GM10248 (cell line): ENCODE measurements at regions of chr15 and their contacts with region 1.

Region 1: DNA sequence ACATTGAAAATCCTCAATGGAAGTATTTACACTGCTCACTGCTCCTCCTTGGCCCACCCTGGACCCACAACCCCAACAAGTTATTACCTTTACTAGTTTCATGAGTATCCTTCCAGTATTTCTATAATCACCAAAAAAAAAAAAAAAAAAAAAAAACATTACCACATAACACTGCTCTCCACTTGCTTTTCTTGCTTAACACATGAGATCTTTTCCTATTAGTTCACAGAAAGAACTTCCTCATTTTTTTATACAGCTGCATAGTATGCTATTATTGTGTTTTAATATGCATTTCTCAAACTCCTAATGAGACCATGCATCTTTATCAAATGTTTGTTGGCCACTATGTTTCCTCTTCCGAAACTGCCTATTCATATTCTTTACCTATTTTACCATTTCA is 14.6 kb downstream of the GABPB1 start:
- DNase-seq: no peak
- CTCF ChIP-seq: no peak

Region 2: GRCh38 chr15:50107591-50108408 is 232.6 kb before region 1 on chr15:
- CTCF ChIA-PET with region 1: no interaction called
- POLR2A ChIA-PET with region 1: no interaction called
- DNase-seq: peak; percentile 65
- CTCF ChIP-seq: no peak

Region 3: DNA sequence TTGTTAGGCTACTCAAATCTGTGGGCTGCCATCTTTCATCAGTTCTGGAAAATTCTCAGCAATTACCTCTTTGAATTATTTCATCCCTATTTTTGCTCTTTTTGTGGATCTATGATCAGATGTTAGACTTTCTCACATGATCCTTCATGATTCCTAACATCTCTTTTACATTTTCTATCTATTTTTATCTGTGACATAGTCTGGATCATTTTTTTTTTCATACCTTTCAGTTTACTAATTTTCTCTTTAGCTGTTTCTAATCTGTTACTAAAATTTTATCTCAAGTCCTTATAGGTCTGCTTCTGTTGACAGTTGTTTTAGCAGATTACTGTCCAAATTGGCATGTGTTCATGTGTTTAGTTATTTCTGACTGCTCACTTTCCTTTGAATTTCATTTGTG is 32.6 kb before region 1 on chr15:
- CTCF ChIA-PET with region 1: no interaction called
- POLR2A ChIA-PET with region 1: no interaction called
- DNase-seq: no peak
- CTCF ChIP-seq: no peak

Region 4: GRCh38 chr15:50350621-50351020 is 10.2 kb after region 1 on chr15:
- CTCF ChIA-PET with region 1: interaction called, 16 read pairs
- POLR2A ChIA-PET with region 1: no interaction called
- DNase-seq: no peak
- CTCF ChIP-seq: no peak

Region 5: GRCh38 chr15:50377867-50378751 is 37.7 kb after region 1 on chr15:
- CTCF ChIA-PET with region 1: no interaction called
- POLR2A ChIA-PET with region 1: no interaction called
- DNase-seq: peak; percentile 81
- CTCF ChIP-seq: no peak

Region 6: DNA sequence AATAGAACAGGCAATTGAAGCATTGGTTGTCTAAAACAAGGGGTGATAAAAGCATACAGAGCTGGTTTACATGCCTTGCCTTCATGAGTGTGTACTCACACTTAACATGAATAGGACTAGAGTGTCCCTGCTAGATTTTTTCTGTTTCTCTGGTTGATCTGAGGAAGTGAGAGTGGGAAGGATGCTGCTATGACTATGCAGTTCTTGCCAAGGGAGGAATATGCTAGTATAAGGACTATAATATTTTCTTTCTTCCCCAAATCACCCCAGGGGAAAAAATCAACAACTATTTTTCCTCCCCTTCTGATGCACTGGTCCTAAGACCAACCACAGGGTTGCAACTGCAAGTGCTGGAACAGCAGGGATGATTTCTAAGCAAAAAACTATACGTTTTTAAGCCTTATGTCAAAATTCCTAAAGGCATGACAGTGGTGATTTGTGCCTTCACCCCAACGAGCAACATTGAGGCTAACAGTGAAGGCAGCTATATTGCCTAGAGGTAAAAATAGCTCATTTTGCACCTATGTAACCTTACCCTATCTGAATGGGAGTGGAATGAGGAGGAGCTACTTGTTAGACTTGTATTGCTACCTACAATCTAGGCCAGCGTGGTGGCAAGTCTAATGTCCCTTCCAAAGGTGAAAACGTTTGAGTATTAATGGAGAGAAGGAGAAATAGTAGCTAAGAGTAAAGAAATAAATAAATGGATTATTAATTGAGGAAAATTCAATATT is 50.3 kb after region 1 on chr15:
- CTCF ChIA-PET with region 1: no interaction called
- POLR2A ChIA-PET with region 1: no interaction called
- DNase-seq: no peak
- CTCF ChIP-seq: no peak